Activated CD4-positive, alpha-beta memory T cell treated with anti-CD3 and anti-CD28 coated beads for 36 hours (primary cell): ENCODE measurements at regions of chr3 and their contacts with region 1.

Region 1: DNA sequence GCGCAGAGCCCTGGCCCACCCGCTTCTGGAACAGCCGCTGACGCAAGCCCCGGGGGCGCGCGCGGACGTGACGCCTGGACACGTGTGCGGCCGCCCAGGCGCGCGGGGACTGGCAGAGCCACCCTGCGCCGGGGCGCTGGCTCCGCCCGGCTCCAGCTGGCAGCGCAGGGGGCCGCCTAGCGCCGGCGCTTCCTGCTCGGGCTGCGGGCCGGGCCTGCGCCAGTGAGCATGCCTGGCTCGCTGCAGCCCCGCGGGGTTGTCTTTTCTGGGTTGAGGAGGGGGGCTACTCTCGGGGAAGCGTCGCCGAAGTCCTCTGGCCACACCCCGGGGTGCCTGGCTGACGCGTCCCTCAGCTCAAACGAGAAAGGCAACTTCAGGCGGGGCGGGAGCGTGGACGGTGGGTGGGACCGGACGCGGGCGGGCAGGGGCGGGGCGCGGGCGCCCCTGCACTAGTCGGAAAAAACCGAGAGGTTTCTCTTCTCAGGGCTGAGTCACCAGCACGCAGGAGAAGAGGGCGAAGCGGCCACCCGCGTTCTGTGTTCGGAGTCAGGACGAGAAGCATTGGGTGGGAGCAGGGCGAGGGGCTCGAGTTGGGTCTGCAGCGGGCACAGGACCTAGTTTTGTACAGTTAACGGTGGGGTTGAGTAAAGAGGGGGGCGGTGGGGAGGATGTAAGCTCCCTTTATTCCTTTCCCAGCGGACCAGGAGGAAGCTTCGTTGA is at the start of gene SIAH2:
- DNase-seq: peak; percentile 96
- H3K4me3 Mint-ChIP-seq: peak within 1 kb of the TSS; percentile 99
- H3K27ac Mint-ChIP-seq: peak within 1 kb of the TSS; percentile 100
- H3K4me1 Mint-ChIP-seq: peaks cover 50% of the 10 kb centered on the region
- H3K27me3 Mint-ChIP-seq: no peaks in the 10 kb centered on the region
- total RNA-seq, gene SIAH2: 74.0 to 74.9 TPM

Region 2: GRCh38 chr3:150546226-150547044 is 216.8 kb before region 1 on chr3 and contains the starts of genes EIF2A and SERP1:
- CTCF ChIA-PET with region 1: interaction called, 6 read pairs
- POLR2A ChIA-PET with region 1: interaction called, 74 read pairs
- intact Hi-C with region 1: loop called (anchors 1 kb)
- DNase-seq: peak; percentile 100
- H3K4me3 Mint-ChIP-seq: peak within 1 kb of the TSS; percentile 99
- H3K27ac Mint-ChIP-seq: peak within 1 kb of the TSS; percentile 96
- H3K4me1 Mint-ChIP-seq: peaks cover 58% of the 10 kb centered on the region
- H3K27me3 Mint-ChIP-seq: no peaks in the 10 kb centered on the region
- total RNA-seq, gene EIF2A: 131 to 137 TPM
- total RNA-seq, gene SERP1: 100 to 111 TPM

Region 3: DNA sequence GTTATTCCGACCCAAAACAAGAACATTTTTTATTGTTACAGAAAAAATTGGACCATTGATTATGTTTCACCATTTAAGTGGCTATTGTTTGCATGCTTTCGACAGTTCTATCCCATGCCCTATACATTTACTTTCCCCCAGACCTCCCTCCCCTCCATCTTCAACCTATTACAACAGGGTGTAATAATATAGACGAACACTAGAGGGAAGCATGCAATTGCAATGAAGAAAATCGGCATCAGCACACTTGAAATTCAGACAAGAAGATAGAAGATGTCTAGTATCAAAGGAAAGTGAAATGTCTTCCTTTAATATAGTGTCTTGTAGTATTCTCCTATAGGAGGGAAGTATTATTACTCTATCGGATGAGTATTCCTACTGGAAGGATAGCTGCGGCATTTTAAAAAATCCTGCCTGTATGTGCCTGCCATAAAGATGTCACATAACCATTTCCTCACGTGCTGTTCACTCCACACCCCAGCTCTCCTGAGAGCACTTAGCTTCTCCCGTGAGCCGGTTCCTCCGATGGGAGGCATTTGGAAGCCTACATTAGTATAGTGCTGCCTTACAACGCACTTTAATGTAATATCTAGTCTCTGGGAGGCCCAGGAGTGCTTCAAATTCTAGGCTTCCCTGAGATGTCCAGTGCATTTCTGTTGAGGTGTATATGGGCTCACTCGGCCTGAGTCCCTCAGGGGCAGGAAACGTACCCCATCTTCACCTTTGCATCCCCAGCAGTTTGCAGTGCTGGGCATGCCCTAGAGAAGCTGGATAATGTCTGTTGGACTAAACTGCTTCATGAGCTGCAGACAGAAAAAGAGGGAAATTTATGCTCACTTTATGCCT is 41.8 kb before region 1 on chr3:
- CTCF ChIA-PET with region 1: interaction called, 35 read pairs
- POLR2A ChIA-PET with region 1: interaction called, 22 read pairs
- intact Hi-C with region 1: loop called (anchors 1 kb)
- DNase-seq: no peak
- H3K4me3 Mint-ChIP-seq: peak overlapping the region; percentile 29
- H3K27ac Mint-ChIP-seq: no peak overlapping the region
- H3K4me1 Mint-ChIP-seq: peaks cover 24% of the 10 kb centered on the region
- H3K27me3 Mint-ChIP-seq: no peaks in the 10 kb centered on the region

Region 4: GRCh38 chr3:150751753-150752263 is 11.5 kb before region 1 on chr3:
- CTCF ChIA-PET with region 1: no interaction called
- POLR2A ChIA-PET with region 1: interaction called, 11 read pairs
- intact Hi-C with region 1: loop called (anchors 1 kb)
- DNase-seq: no peak
- H3K4me3 Mint-ChIP-seq: no peak overlapping the region
- H3K27ac Mint-ChIP-seq: peak overlapping the region; percentile 69
- H3K4me1 Mint-ChIP-seq: peaks cover 87% of the 10 kb centered on the region
- H3K27me3 Mint-ChIP-seq: no peaks in the 10 kb centered on the region

Region 5: DNA sequence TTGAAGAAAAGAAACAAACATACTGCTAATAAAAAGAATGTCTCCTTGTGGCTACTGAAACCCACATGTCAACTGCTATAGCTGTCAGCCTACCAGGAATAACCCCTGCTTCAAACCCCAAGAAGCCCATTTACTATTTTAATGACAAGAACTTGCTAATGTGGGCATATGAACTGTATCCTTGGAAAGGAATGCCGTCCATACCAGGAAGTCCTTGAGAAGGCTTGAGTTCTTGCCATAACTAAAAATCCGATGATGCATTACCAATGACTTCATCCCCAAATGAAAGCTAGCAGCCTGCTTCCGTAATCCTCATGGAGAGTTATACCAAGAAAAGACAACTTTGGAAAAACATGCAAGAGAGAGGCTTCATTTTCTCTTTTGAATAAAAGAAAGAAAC is 107.1 kb after region 1 on chr3:
- CTCF ChIA-PET with region 1: interaction called, 9 read pairs
- POLR2A ChIA-PET with region 1: interaction called, 3 read pairs
- intact Hi-C with region 1: loop called (anchors 1 kb)
- DNase-seq: no peak
- H3K4me3 Mint-ChIP-seq: no peak overlapping the region
- H3K27ac Mint-ChIP-seq: no peak overlapping the region
- H3K4me1 Mint-ChIP-seq: peaks cover 1% of the 10 kb centered on the region
- H3K27me3 Mint-ChIP-seq: peaks cover 14% of the 10 kb centered on the region

Region 6: GRCh38 chr3:152193673-152194267 is 1430.5 kb after region 1 on chr3:
- CTCF ChIA-PET with region 1: no interaction called
- POLR2A ChIA-PET with region 1: no interaction called
- intact Hi-C with region 1: loop called (anchors 5 kb)
- DNase-seq: peak; percentile 58
- H3K4me3 Mint-ChIP-seq: peak overlapping the region; percentile 78
- H3K27ac Mint-ChIP-seq: peak overlapping the region; percentile 85
- H3K4me1 Mint-ChIP-seq: peaks cover 81% of the 10 kb centered on the region
- H3K27me3 Mint-ChIP-seq: no peaks in the 10 kb centered on the region